ENCODE measurements at regions of chr1 and their contacts with region 1.

Region 1: DNA sequence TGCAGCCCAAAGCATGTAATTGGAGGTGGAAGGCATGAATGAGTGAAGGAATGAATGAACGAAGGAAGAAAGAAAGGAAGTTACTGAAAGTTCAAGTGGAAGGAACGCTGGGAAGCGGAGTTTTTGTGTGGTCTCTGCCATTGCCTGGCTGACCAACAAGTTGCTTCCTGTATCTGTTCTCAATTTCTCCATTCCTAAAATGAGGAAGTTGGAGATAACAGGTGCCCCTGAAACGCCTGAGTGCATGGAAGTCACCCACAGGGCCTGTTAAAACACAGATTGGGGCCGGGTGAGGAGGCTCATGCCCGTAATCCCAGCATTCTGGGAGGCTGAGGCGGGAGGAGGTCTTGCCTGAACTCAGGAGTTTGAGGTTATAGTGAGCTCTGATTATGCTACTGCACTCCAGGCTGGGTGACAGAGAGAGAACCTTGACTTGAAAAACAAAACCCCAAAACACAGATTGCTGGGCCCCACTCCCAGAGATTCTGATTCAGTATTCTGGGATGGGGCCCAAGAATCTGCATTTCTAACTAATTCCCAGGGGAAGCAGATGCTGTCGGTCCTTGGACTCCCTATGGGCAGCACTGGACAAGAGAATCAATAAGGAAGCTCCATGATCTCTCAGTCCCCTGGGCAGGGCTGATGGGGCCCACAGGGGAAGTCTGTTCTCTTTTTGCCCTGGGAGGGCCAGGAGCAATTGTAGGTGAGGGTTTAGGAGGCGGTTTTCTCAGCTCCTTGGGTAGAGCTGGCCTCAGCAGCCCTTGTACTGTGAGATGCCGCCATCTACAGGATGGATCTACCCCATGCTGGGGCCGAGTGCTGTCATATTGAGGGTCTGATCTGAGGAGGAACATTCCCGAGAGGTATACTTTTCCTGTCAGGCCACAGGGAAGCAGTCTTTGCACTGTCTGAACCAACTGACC is 3.3 kb upstream of the CNR2 start:
- DNase-seq: peak; percentile 70
- H3K4me3 ChIP-seq: no peak overlapping the region
- H3K27ac ChIP-seq: no peak overlapping the region
- H3K4me1 ChIP-seq: no peaks in the 10 kb centered on the region
- H3K27me3 ChIP-seq: no peaks in the 10 kb centered on the region
- CTCF ChIP-seq: peak; percentile 69 to 78

Region 2: GRCh38 chr1:23790696-23791515 is 125.6 kb before region 1 on chr1 and contains the start of gene LYPLA2:
- CTCF ChIA-PET with region 1: no interaction called
- dilution Hi-C with region 1: no loop called
- in situ Hi-C with region 1: no loop called
- intact Hi-C with region 1: loop called (anchors 1 kb)
- DNase-seq: peak; percentile 87
- H3K4me3 ChIP-seq: peak within 1 kb of the TSS; percentile 64 to 75 (median 68)
- H3K27ac ChIP-seq: peak within 1 kb of the TSS; percentile 45
- H3K4me1 ChIP-seq: peaks cover 35% of the 10 kb centered on the region
- H3K27me3 ChIP-seq: no peaks in the 10 kb centered on the region
- CTCF ChIP-seq: no peak
- total RNA-seq, gene LYPLA2: 81.5 to 89.8 TPM

Region 3: DNA sequence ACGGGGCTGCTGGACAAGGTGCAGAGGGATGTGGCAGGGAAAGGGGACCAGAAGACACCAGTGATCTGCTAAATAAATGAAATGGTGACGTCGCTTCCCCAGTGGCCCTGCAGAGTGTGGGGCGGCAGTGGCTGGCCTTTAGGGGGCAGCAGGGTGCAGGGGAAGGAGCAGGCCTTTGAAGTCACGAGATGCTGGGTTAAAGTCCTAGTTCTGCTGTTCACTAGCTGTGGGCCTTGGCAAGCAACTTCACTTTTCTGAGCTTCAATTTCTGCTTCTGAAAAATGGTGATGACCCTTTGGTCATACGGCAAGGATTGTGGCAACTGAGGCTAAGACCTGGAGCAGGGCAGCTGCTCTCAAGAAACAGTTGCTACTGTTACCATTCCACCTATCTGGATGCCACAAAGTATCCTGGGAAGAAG is 106.7 kb before region 1 on chr1:
- CTCF ChIA-PET with region 1: interaction called, 9 read pairs
- dilution Hi-C with region 1: no loop called
- in situ Hi-C with region 1: loop called in 1 of 2 experiments (anchors 10 kb)
- intact Hi-C with region 1: loop called (anchors 1 kb)
- DNase-seq: peak; percentile 45
- H3K4me3 ChIP-seq: no peak overlapping the region
- H3K27ac ChIP-seq: no peak overlapping the region
- H3K4me1 ChIP-seq: no peaks in the 10 kb centered on the region
- H3K27me3 ChIP-seq: no peaks in the 10 kb centered on the region
- CTCF ChIP-seq: peak; percentile 91

Region 4: GRCh38 chr1:23951571-23952095 is 35.2 kb after region 1 on chr1:
- CTCF ChIA-PET with region 1: no interaction called
- dilution Hi-C with region 1: loop called (anchors 5 kb)
- in situ Hi-C with region 1: no loop called
- intact Hi-C with region 1: loop called (anchors 5 kb)
- DNase-seq: peak; percentile 98
- H3K4me3 ChIP-seq: no peak overlapping the region
- H3K27ac ChIP-seq: peak overlapping the region; percentile 51
- H3K4me1 ChIP-seq: peaks cover 23% of the 10 kb centered on the region
- H3K27me3 ChIP-seq: no peaks in the 10 kb centered on the region
- CTCF ChIP-seq: no peak

Region 5: GRCh38 chr1:24027838-24028468 is 111.5 kb after region 1 on chr1:
- CTCF ChIA-PET with region 1: no interaction called
- dilution Hi-C with region 1: no loop called
- in situ Hi-C with region 1: no loop called
- intact Hi-C with region 1: loop called (anchors 1 kb)
- DNase-seq: peak; percentile 47
- H3K4me3 ChIP-seq: no peak overlapping the region
- H3K27ac ChIP-seq: no peak overlapping the region
- H3K4me1 ChIP-seq: peaks cover under 1% of the 10 kb centered on the region
- H3K27me3 ChIP-seq: no peaks in the 10 kb centered on the region
- CTCF ChIP-seq: peak; percentile 58 to 66

Measured in mammary epithelial cell (primary cell).